CD8-positive, alpha-beta T cell (primary cell): ENCODE measurements at regions of chr20 and their contacts with region 1.

Region 1: DNA sequence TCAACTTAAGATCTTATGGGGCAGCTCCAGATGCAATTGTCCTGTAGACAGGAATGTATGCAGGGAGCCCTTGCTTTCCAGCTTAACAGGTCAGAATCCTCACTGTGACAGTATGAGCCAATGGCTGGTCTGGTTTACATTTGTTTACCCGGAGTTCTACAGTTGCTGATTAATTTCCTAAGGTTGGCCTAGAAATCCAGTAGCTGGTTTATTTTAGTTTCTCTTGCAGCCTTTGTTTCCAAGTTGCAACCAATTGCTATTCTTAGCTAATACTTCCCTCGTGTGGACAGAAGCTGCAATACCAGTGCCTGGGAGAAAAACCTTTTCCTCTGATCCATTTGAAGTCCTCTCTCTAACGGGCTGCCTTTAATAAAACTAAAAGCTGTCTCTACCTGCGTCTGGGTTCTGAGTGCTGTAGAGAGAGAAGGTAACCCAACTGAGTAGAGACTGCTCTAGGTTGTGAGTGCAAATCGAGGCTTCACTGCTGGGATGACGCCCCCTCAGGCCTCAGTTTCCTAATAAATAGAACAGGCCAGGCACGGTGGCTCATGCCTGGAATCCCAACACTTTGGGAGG is 45.9 kb downstream of the ZNF217 start:
- DNase-seq: peak in 6 of 9 experiments; percentile 17 to 60 (median 38)
- ATAC-seq: peak; percentile 51
- H3K4me3 ChIP-seq: no peak overlapping the region
- H3K4me3 Mint-ChIP-seq: no peak overlapping the region
- H3K27ac ChIP-seq: no peak overlapping the region
- H3K27ac Mint-ChIP-seq: no peak overlapping the region
- H3K4me1 ChIP-seq: no peaks in the 10 kb centered on the region
- H3K4me1 Mint-ChIP-seq: peaks cover 5% of the 10 kb centered on the region
- H3K27me3 ChIP-seq: no peaks in the 10 kb centered on the region
- H3K27me3 Mint-ChIP-seq: no peaks in the 10 kb centered on the region
- CTCF ChIP-seq: peak; percentile 67

Region 2: DNA sequence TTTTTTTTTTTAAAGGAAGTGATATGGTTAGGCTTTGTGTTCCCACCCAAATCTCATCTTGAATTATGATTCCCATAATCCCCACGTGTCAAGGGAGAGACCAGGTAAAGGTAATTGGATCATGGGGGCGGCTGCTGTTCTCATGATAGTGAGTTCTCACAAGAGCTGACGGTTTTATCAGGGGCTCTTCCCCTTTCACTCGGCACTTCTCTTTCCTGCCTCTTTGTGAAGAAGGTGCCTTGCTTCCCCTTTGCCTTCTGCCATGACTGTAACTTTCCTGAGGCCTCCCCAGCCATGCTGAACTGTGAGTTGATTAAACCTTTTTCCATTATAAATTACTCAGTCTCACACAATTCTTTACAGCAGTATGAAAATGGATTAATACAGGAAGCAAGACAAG is 1420.4 kb before region 1 on chr20:
- CTCF ChIA-PET with region 1: interaction called, 3 read pairs
- POLR2A ChIA-PET with region 1: no interaction called
- intact Hi-C with region 1: loop called in 1 of 2 experiments (anchors 2 kb)
- DNase-seq: no peak
- ATAC-seq: no peak
- H3K4me3 ChIP-seq: no peak overlapping the region
- H3K4me3 Mint-ChIP-seq: no peak overlapping the region
- H3K27ac ChIP-seq: no peak overlapping the region
- H3K27ac Mint-ChIP-seq: no peak overlapping the region
- H3K4me1 ChIP-seq: no peaks in the 10 kb centered on the region
- H3K4me1 Mint-ChIP-seq: peaks cover 3% of the 10 kb centered on the region
- H3K27me3 ChIP-seq: no peaks in the 10 kb centered on the region
- H3K27me3 Mint-ChIP-seq: no peaks in the 10 kb centered on the region
- CTCF ChIP-seq: no peak

Region 3: DNA sequence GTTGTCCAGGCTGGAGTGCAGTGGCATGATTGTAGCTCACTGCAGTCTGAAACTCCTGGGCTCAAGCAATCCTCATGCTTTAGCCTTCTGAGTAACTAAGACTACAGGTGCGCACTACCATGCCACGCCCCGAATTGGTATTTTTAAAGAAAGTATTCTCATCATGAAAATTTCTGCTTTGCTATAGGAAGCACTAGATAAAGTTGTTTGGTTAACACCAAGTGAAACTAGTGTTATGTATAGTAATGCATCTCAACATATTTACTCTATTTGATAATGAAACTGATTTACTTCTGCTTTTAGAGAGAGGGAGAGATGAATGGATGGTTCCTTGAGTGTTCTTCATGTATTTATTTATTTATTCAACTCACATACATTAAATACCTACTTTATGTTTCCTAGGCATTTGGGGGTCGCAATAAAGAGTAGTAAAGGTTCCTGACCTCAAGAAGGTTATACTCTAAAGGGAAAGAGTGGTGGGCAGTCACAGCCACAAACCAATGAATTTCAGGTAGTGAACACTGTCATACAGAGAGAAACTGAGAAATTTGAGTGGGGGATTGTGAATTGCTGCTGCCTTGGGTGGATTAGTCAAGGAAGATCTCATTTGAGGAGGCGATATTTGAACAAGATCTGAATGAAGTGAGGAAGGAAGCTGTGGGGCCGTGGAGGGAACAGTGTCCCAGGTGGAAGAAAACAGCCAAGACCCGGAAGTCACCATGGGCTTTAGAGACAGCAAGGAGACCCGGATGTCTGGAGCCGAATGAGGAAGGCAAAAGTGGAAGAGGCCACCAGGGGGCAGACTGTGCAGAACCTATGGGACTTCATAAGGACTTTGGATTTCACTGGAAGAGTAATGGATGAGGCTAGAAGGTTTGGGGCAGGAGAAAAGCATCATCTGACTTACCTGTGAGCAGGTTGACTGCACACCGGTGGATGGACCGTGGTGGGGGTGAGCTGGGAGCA is 390.0 kb before region 1 on chr20:
- CTCF ChIA-PET with region 1: interaction called, 4 read pairs
- POLR2A ChIA-PET with region 1: no interaction called
- intact Hi-C with region 1: loop called in 1 of 2 experiments (anchors 1 kb)
- DNase-seq: peak in 8 of 9 experiments; percentile 2 to 67 (median 46)
- ATAC-seq: no peak
- H3K4me3 ChIP-seq: no peak overlapping the region
- H3K4me3 Mint-ChIP-seq: no peak overlapping the region
- H3K27ac ChIP-seq: no peak overlapping the region
- H3K27ac Mint-ChIP-seq: no peak overlapping the region
- H3K4me1 ChIP-seq: no peaks in the 10 kb centered on the region
- H3K4me1 Mint-ChIP-seq: no peaks in the 10 kb centered on the region
- H3K27me3 ChIP-seq: peaks cover 0 to 2% of the 10 kb centered on the region in 2 experiments
- H3K27me3 Mint-ChIP-seq: peaks cover 6% of the 10 kb centered on the region
- CTCF ChIP-seq: peak; percentile 46

Region 4: DNA sequence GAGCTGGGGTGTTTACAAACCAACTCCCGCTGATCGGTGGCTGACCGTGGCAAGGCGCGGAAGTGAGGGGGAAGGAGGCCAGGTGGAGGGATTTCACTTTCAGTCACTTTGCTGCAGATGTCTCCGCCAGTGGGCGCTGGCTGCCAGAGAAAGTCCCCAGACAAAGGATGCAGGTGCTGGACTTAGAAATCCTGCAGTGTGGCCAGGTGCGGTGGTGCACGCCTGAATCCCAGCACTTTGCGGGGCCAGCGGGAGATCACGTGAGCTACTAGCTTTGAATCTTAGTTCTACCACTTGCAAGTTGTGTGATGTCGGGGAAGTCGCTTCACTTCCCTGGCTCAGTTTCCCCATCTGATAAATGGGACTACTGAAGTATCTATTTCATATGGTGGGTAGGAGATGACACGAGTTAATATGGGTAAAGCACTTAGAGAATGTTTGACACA is 134.5 kb before region 1 on chr20:
- CTCF ChIA-PET with region 1: interaction called, 6 read pairs
- POLR2A ChIA-PET with region 1: no interaction called
- intact Hi-C with region 1: loop called in 1 of 2 experiments (anchors 10 kb)
- DNase-seq: peak; percentile 23 to 75 (median 53)
- ATAC-seq: no peak
- H3K4me3 ChIP-seq: no peak overlapping the region
- H3K4me3 Mint-ChIP-seq: peak overlapping the region; percentile 53
- H3K27ac ChIP-seq: no peak overlapping the region
- H3K27ac Mint-ChIP-seq: peak overlapping the region; percentile 32
- H3K4me1 ChIP-seq: peaks cover 4% of the 10 kb centered on the region
- H3K4me1 Mint-ChIP-seq: peaks cover 6% of the 10 kb centered on the region
- H3K27me3 ChIP-seq: no peaks in the 10 kb centered on the region
- H3K27me3 Mint-ChIP-seq: peaks cover 3% of the 10 kb centered on the region
- CTCF ChIP-seq: peak; percentile 51

Region 5: DNA sequence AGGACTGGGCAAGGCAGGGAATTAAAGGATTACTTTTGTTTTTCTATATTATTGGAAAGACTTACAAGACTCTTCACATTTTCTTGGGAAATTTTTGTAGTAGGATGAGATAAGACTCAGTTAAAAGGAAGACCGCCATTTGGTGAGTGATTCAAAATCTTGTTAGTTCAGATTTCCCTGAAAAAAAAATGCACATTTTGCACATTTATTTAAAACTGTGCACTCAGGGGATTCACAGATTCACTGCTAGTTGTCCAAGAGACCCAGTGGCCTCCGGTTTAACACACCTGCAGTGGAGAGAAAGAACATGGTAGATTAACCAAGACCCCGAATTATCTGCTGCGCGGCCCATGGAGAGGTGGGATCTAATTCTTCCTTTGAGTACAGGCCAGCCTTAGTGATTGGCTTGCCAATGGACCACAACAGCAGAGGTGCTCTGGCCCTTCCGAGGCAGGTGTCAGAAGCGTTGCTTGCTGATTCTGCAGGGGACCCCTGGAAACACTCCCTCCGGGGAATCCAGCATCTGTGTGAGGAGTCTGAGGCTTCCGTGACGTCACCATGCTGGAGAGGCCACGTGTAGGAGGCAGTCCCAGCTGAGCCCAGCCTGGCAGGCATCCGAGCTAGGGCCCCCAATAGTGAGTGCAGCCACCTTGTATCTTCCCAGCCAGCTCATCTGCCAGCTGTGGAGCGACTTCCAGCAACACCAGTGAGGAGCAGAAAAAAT is 23.0 kb before region 1 on chr20:
- CTCF ChIA-PET with region 1: no interaction called
- POLR2A ChIA-PET with region 1: no interaction called
- intact Hi-C with region 1: no loop called
- DNase-seq: no peak
- ATAC-seq: no peak
- H3K4me3 ChIP-seq: no peak overlapping the region
- H3K4me3 Mint-ChIP-seq: no peak overlapping the region
- H3K27ac ChIP-seq: no peak overlapping the region
- H3K27ac Mint-ChIP-seq: no peak overlapping the region
- H3K4me1 ChIP-seq: no peaks in the 10 kb centered on the region
- H3K4me1 Mint-ChIP-seq: no peaks in the 10 kb centered on the region
- H3K27me3 ChIP-seq: no peaks in the 10 kb centered on the region
- H3K27me3 Mint-ChIP-seq: no peaks in the 10 kb centered on the region
- CTCF ChIP-seq: no peak

Region 6: GRCh38 chr20:53956013-53956715 is 408.4 kb after region 1 on chr20:
- CTCF ChIA-PET with region 1: no interaction called
- POLR2A ChIA-PET with region 1: no interaction called
- intact Hi-C with region 1: no loop called
- DNase-seq: no peak
- ATAC-seq: no peak
- H3K4me3 ChIP-seq: no peak overlapping the region
- H3K4me3 Mint-ChIP-seq: no peak overlapping the region
- H3K27ac ChIP-seq: no peak overlapping the region
- H3K27ac Mint-ChIP-seq: no peak overlapping the region
- H3K4me1 ChIP-seq: no peaks in the 10 kb centered on the region
- H3K4me1 Mint-ChIP-seq: peaks cover 3% of the 10 kb centered on the region
- H3K27me3 ChIP-seq: no peaks in the 10 kb centered on the region
- H3K27me3 Mint-ChIP-seq: no peaks in the 10 kb centered on the region
- CTCF ChIP-seq: no peak

Region 7: DNA sequence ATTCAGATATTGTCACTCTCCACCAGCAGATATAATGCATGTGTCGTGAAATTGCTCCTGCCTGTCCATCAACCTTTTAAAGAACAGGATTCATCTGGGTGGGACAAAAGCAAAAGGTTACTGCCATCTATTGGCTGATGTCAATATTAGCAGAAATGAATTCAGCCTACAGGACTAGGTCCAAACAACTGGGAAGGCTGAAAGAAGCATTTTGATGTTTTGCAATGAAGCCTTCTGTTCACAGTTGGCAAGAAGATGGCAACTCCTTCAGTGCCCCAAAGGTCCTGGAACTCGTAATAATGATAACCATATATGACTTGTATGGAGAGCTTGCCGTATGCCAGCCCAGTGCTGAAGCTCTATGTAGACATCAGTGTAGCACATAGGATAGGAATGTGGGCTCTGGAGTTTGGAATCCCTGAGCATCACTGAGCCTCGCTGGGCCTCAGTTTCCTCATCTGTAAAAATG is 515.1 kb after region 1 on chr20:
- CTCF ChIA-PET with region 1: interaction called, 12 read pairs
- POLR2A ChIA-PET with region 1: no interaction called
- intact Hi-C with region 1: no loop called
- DNase-seq: peak in 2 of 9 experiments; percentile 40 to 60
- ATAC-seq: no peak
- H3K4me3 ChIP-seq: no peak overlapping the region
- H3K4me3 Mint-ChIP-seq: no peak overlapping the region
- H3K27ac ChIP-seq: no peak overlapping the region
- H3K27ac Mint-ChIP-seq: no peak overlapping the region
- H3K4me1 ChIP-seq: peaks cover 24% of the 10 kb centered on the region
- H3K4me1 Mint-ChIP-seq: no peaks in the 10 kb centered on the region
- H3K27me3 ChIP-seq: no peaks in the 10 kb centered on the region
- H3K27me3 Mint-ChIP-seq: no peaks in the 10 kb centered on the region
- CTCF ChIP-seq: peak; percentile 53

Region 8: GRCh38 chr20:54585227-54585626 is 1037.5 kb after region 1 on chr20:
- CTCF ChIA-PET with region 1: no interaction called
- POLR2A ChIA-PET with region 1: no interaction called
- intact Hi-C with region 1: no loop called
- DNase-seq: no peak
- ATAC-seq: no peak
- H3K4me3 ChIP-seq: no peak overlapping the region
- H3K4me3 Mint-ChIP-seq: no peak overlapping the region
- H3K27ac ChIP-seq: no peak overlapping the region
- H3K27ac Mint-ChIP-seq: no peak overlapping the region
- H3K4me1 ChIP-seq: no peaks in the 10 kb centered on the region
- H3K4me1 Mint-ChIP-seq: no peaks in the 10 kb centered on the region
- H3K27me3 ChIP-seq: no peaks in the 10 kb centered on the region
- H3K27me3 Mint-ChIP-seq: peaks cover 2% of the 10 kb centered on the region
- CTCF ChIP-seq: no peak